Caco-2 (cell line): ENCODE measurements at regions of chr6 and their contacts with region 1.

Region 1: GRCh38 chr6:3664625-3665041 is 86.9 kb downstream of the PXDC1 start:
- DNase-seq: peak; percentile 78 to 80
- H3K4me3 ChIP-seq: peak overlapping the region; percentile 12; the same call in 1 of the 2 replicates
- H3K4me3 Mint-ChIP-seq: peak overlapping the region; percentile 70
- H3K27ac Mint-ChIP-seq: peak overlapping the region; percentile 82
- H3K4me1 ChIP-seq: peaks cover 36% of the 10 kb centered on the region
- H3K4me1 Mint-ChIP-seq: peaks cover 18% of the 10 kb centered on the region
- H3K27me3 ChIP-seq: no peaks in the 10 kb centered on the region
- H3K27me3 Mint-ChIP-seq: no peaks in the 10 kb centered on the region
- CTCF ChIP-seq: no peak

Region 2: DNA sequence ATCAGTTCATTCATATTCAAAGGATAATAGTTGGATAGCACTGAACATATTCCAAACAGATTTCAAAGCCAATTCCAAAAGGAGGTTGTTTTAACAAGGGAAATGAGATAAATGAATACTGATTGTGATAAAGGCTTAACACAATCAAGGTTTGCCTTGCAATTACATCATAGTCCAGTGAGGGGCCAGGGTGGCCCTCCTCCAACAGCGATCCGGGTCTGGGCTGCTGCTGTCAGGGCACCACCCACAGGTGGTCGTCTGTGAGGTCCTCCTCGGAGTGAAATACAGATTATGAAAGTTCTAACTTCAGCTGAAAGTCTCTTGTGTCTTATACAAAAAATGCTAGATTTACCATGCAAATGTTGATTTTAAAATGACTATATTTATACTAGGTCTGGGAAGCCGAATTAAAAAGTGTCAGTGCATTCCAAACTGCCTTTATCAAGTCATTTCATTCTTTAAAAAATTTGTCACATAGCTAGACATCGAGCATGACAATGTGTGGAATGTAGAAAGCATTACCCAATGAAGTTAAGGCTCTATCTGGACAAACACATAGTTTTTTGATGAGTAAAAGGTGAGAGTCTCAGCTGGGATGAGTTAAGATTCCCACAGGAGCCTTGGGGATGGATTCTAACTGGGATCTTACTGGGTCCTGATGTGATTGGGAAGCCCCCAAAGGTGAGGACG is 141.9 kb before region 1 on chr6:
- CTCF ChIA-PET with region 1: no interaction called
- POLR2A ChIA-PET with region 1: no interaction called
- intact Hi-C with region 1: loop called (anchors 5 kb)
- DNase-seq: peak; percentile 48 to 50
- H3K4me3 ChIP-seq: no peak overlapping the region
- H3K4me3 Mint-ChIP-seq: peak overlapping the region; percentile 23
- H3K27ac Mint-ChIP-seq: peak overlapping the region; percentile 88
- H3K4me1 ChIP-seq: peaks cover 83% of the 10 kb centered on the region
- H3K4me1 Mint-ChIP-seq: peaks cover 37% of the 10 kb centered on the region
- H3K27me3 ChIP-seq: no peaks in the 10 kb centered on the region
- H3K27me3 Mint-ChIP-seq: no peaks in the 10 kb centered on the region
- CTCF ChIP-seq: no peak

Region 3: GRCh38 chr6:3568396-3569082 is 96.1 kb before region 1 on chr6:
- CTCF ChIA-PET with region 1: no interaction called
- POLR2A ChIA-PET with region 1: no interaction called
- intact Hi-C with region 1: loop called (anchors 2 kb)
- DNase-seq: peak; percentile 41 to 50
- H3K4me3 ChIP-seq: no peak overlapping the region
- H3K4me3 Mint-ChIP-seq: no peak overlapping the region
- H3K27ac Mint-ChIP-seq: no peak overlapping the region
- H3K4me1 ChIP-seq: peaks cover 16% of the 10 kb centered on the region
- H3K4me1 Mint-ChIP-seq: peaks cover 15% of the 10 kb centered on the region
- H3K27me3 ChIP-seq: no peaks in the 10 kb centered on the region
- H3K27me3 Mint-ChIP-seq: no peaks in the 10 kb centered on the region
- CTCF ChIP-seq: no peak

Region 4: DNA sequence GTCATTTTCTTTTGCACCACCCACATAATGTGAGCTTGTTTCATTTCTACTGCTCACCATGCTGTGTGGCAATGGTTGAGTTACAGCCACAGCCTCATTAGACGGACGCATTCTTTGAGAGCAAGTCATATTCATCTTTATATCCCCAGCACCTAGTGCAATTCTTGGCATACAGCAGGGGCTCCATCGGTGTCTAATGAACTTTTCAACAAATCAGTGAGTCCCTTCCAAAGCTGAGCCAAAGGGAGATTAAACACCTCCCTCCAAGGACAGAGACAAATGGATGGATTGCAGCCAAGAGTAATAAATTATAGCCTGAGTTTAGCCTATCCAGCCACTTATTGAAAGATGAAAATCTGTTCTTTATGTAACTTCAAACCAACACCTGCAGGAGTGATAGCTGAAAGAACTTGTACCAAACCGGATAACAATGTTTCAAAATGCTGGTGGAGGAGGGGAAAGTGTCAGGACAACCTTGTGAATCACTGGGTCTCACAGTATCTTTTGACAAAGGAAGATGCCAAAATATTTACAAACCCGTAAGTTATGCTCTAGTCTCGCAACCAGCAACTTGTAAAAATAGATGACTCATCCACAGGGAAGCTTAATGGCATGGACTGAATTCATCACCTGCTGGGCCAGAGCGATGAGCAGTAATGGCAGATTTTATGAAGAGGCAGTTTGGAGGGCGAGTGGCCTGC is 52.1 kb before region 1 on chr6:
- CTCF ChIA-PET with region 1: no interaction called
- POLR2A ChIA-PET with region 1: no interaction called
- intact Hi-C with region 1: no loop called
- DNase-seq: peak in 1 of 2 experiments; percentile 30
- H3K4me3 ChIP-seq: no peak overlapping the region
- H3K4me3 Mint-ChIP-seq: no peak overlapping the region
- H3K27ac Mint-ChIP-seq: no peak overlapping the region
- H3K4me1 ChIP-seq: no peaks in the 10 kb centered on the region
- H3K4me1 Mint-ChIP-seq: peaks cover 6% of the 10 kb centered on the region
- H3K27me3 ChIP-seq: no peaks in the 10 kb centered on the region
- H3K27me3 Mint-ChIP-seq: no peaks in the 10 kb centered on the region
- CTCF ChIP-seq: no peak

Region 5: DNA sequence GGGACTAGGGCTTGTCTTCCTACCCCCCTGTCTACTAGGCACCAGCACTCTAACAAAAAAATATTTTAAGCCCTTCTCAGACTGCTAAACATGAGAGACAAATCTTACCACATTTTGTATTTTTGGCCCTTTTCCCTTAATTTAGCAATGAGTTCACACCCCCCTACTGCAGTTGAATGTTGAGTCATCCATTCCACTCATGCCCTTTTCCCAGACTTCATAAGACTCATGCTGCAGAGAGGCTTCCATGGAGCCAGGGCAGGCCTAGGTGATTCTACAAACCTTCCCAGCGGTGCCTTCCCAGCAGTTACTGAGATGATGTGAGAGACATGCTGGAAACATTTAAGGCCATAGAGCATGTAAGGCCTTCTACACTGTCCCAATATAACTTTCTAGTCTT is 33.0 kb after region 1 on chr6:
- CTCF ChIA-PET with region 1: interaction called, 3 read pairs
- POLR2A ChIA-PET with region 1: interaction called, 3 read pairs
- intact Hi-C with region 1: loop called (anchors 5 kb)
- DNase-seq: no peak
- H3K4me3 ChIP-seq: no peak overlapping the region
- H3K4me3 Mint-ChIP-seq: no peak overlapping the region
- H3K27ac Mint-ChIP-seq: peak overlapping the region; percentile 60
- H3K4me1 ChIP-seq: peaks cover 24% of the 10 kb centered on the region
- H3K4me1 Mint-ChIP-seq: peaks cover 34% of the 10 kb centered on the region
- H3K27me3 ChIP-seq: no peaks in the 10 kb centered on the region
- H3K27me3 Mint-ChIP-seq: no peaks in the 10 kb centered on the region
- CTCF ChIP-seq: no peak